ENCODE measurements at regions of chr15 and their contacts with region 1.

Region 1: GRCh38 chr15:31857194-31857593 is 173.1 kb upstream of the CHRNA7 start:
- DNase-seq: no peak
- ATAC-seq: no peak
- H3K4me3 ChIP-seq: no peak overlapping the region
- H3K27ac ChIP-seq: no peak overlapping the region
- H3K4me1 ChIP-seq: no peaks in the 10 kb centered on the region
- H3K27me3 ChIP-seq: no peaks in the 10 kb centered on the region
- CTCF ChIP-seq: no peak

Region 2: GRCh38 chr15:31768055-31768454 is 89.1 kb before region 1 on chr15:
- intact Hi-C with region 1: no loop called
- DNase-seq: no peak
- ATAC-seq: no peak
- H3K4me3 ChIP-seq: no peak overlapping the region
- H3K27ac ChIP-seq: no peak overlapping the region
- H3K4me1 ChIP-seq: no peaks in the 10 kb centered on the region
- H3K27me3 ChIP-seq: no peaks in the 10 kb centered on the region
- CTCF ChIP-seq: no peak

Region 3: GRCh38 chr15:31799715-31800321 is 57.4 kb before region 1 on chr15:
- intact Hi-C with region 1: loop called in 1 of 10 experiments (anchors 10 kb)
- DNase-seq: peak in 1 of 2 donors; percentile 28
- ATAC-seq: peak in 6 of 8 donors; percentile 43 to 90 (median 78)
- H3K4me3 ChIP-seq: no peak overlapping the region
- H3K27ac ChIP-seq: peak overlapping the region in 3 of 10 donors; percentile 31 to 61 (median 32)
- H3K4me1 ChIP-seq: peaks cover 0 to 19% (median 4%) of the 10 kb centered on the region in 9 donors
- H3K27me3 ChIP-seq: no peaks in the 10 kb centered on the region
- CTCF ChIP-seq: no peak

Region 4: DNA sequence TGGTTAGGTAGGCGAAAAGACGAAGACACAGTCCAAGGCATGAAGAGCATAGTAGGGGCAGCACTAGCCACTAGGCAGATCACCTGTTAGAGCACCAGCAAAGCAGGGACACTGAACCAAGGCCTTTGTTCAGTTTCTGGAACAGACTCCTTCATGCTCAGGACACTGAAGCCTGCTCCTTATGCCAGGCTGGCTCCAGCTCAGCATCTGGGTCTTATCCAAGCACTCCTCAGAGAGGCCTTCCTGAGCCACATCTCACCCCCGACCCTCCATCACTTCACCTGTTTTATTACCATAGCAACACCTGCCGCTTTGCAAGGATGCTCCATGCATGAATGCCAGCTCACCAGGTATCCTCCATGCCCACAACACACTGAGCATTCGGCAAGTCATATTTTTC is 33.2 kb before region 1 on chr15:
- intact Hi-C with region 1: loop called in 1 of 10 experiments (anchors 5 kb)
- DNase-seq: no peak
- ATAC-seq: no peak
- H3K4me3 ChIP-seq: no peak overlapping the region
- H3K27ac ChIP-seq: no peak overlapping the region
- H3K4me1 ChIP-seq: peaks cover 0 to 6% (median 0%) of the 10 kb centered on the region in 9 donors
- H3K27me3 ChIP-seq: no peaks in the 10 kb centered on the region
- CTCF ChIP-seq: no peak

Measured in heart right ventricle (tissue), 16 donors.